PC-3 (cell line): ENCODE measurements at regions of chr19 and their contacts with region 1.

Region 1: DNA sequence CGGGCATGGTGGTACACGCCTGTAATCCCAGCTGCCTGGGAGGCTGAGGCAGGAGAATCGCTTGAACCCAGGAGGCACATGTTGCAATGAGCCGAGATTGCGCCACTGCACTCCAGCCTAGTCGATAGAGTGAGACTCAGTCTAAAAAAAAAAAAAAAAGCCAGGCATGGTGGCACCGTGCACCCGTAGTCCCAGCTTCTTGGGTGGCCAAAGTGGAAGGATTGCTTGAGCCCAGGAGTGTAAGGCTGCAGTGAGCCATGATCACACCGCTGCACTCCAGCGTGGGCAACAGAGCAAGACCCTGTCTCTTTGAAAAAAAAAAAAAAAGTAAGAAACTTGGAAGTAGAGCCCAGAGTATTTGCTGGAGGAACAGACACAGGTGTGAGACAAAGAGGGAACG is 27.7 kb downstream of the CCDC8 start:
- DNase-seq: no peak
- ATAC-seq: no peak
- H3K4me3 ChIP-seq: no peak overlapping the region
- H3K27ac ChIP-seq: no peak overlapping the region
- H3K4me1 ChIP-seq: no peaks in the 10 kb centered on the region
- H3K27me3 ChIP-seq: no peaks in the 10 kb centered on the region
- CTCF ChIP-seq: no peak

Region 2: DNA sequence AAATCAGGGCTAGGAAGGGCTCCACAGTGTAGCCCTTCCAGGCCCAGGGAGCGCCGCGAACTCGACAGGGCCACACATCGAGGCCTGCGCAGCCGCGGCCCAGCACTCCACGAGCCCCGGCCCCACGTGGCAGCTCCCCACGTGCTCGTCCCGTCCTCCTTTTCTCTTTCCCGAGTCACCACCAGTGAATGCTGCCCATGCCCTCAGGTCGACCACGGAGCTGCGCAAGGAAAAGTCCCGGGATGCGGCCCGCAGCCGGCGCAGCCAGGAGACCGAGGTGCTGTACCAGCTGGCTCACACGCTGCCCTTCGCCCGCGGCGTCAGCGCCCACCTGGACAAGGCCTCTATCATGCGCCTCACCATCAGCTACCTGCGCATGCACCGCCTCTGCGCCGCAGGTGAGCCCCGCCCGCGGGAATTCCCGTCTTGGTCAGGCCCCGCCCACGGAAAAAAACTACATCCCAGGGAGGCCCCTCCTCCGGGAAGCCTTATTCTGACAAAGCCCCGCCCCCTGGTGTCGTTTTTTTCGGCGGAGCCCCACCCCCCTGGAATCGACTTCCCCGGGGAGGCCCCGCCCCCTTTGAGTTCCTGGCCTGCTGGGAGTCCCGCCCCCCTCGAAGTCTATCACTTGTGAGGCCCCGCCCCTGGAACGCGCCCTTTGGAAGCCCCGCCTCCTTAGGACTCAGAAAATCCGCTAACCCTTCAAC is 81.8 kb before region 1 on chr19:
- CTCF ChIA-PET with region 1: no interaction called
- POLR2A ChIA-PET with region 1: no interaction called
- intact Hi-C with region 1: no loop called
- DNase-seq: no peak
- ATAC-seq: no peak
- H3K4me3 ChIP-seq: no peak overlapping the region
- H3K27ac ChIP-seq: no peak overlapping the region
- H3K4me1 ChIP-seq: peaks cover under 1% of the 10 kb centered on the region; the same call in 1 of the 2 replicates
- H3K27me3 ChIP-seq: no peaks in the 10 kb centered on the region
- CTCF ChIP-seq: no peak

Region 3: DNA sequence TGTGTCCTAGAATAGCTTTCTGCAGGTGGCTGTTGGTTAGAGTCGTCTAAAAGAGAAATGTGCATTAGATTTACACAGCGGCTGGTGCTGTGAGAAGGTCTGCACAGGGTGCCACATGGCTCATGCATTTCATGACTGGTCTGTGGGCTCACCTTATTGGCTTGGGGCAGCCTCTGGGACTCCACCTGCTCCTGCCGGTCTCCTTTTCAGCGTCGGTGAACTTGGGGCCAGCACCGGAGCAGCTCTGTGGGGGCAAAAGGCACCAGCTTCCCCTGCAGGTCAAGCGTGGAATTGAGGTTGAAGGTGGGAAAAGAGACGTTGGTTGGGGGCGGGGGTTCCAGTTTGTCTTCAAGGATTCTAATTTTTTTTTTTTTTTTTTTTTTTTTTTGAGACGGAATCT is 46.2 kb after region 1 on chr19:
- CTCF ChIA-PET with region 1: interaction called, 18 read pairs
- POLR2A ChIA-PET with region 1: no interaction called
- intact Hi-C with region 1: no loop called
- DNase-seq: no peak
- ATAC-seq: no peak
- H3K4me3 ChIP-seq: no peak overlapping the region
- H3K27ac ChIP-seq: no peak overlapping the region
- H3K4me1 ChIP-seq: no peaks in the 10 kb centered on the region
- H3K27me3 ChIP-seq: no peaks in the 10 kb centered on the region
- CTCF ChIP-seq: no peak